ENCODE measurements at regions of chr11 and their contacts with region 1.

Region 1: GRCh38 chr11:57680552-57680874 is 12.6 kb downstream of the ZDHHC5 start:
- DNase-seq: peak in 2 of 4 experiments; percentile 52 to 62
- ATAC-seq: peak; percentile 84
- H3K4me3 ChIP-seq: no peak overlapping the region
- H3K27ac ChIP-seq: peak overlapping the region; percentile 19; the same call in 1 of the 3 replicates
- H3K4me1 ChIP-seq: peaks cover 3 to 25% of the 10 kb centered on the region in 2 experiments; a peak in 3 of 5 replicates
- H3K27me3 ChIP-seq: no peaks in the 10 kb centered on the region
- CTCF ChIP-seq: no peak
- EP300 ChIP-seq: no peak
- POLR2A ChIP-seq: no peak
- RAD21 ChIP-seq: no peak

Region 2: DNA sequence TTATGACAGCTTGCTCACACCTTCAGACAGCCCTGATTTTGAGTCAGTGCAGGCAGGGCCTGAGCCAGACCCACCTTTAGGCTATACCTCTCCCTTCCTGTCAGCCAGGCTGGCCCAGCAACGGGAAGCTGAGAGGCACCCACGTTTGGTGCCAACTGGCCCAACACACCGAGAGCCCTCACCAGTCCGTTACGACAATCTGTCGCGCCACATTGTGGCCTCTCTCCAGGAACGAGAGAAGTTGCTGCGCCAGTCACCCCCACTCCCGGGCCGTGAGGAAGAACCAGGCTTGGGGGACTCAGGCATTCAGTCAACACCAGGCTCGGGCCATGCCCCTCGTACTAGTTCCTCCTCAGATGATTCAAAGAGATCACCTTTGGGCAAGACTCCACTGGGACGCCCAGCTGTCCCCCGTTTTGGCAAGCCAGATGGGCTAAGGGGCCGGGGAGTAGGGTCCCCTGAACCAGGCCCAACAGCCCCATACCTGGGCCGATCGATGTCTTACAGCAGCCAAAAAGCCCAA is 18.4 kb after region 1 on chr11:
- CTCF ChIA-PET with region 1: no interaction called
- POLR2A ChIA-PET with region 1: interaction called, 11 read pairs
- in situ Hi-C with region 1: no loop called
- intact Hi-C with region 1: no loop called
- DNase-seq: no peak
- ATAC-seq: no peak
- H3K4me3 ChIP-seq: no peak overlapping the region
- H3K27ac ChIP-seq: no peak overlapping the region
- H3K4me1 ChIP-seq: no peaks in the 10 kb centered on the region
- H3K27me3 ChIP-seq: no peaks in the 10 kb centered on the region
- CTCF ChIP-seq: no peak
- EP300 ChIP-seq: no peak
- POLR2A ChIP-seq: no peak
- RAD21 ChIP-seq: no peak

Region 3: GRCh38 chr11:57812634-57813033 is 132.1 kb after region 1 on chr11:
- CTCF ChIA-PET with region 1: no interaction called
- POLR2A ChIA-PET with region 1: no interaction called
- in situ Hi-C with region 1: no loop called
- intact Hi-C with region 1: no loop called
- DNase-seq: no peak
- ATAC-seq: no peak
- H3K4me3 ChIP-seq: no peak overlapping the region
- H3K27ac ChIP-seq: no peak overlapping the region
- H3K4me1 ChIP-seq: no peaks in the 10 kb centered on the region
- H3K27me3 ChIP-seq: no peaks in the 10 kb centered on the region
- CTCF ChIP-seq: no peak
- EP300 ChIP-seq: no peak
- POLR2A ChIP-seq: no peak
- RAD21 ChIP-seq: no peak

Measured in K562 (cell line).